ENCODE measurements at regions of chr4 and their contacts with region 1.

Region 1: DNA sequence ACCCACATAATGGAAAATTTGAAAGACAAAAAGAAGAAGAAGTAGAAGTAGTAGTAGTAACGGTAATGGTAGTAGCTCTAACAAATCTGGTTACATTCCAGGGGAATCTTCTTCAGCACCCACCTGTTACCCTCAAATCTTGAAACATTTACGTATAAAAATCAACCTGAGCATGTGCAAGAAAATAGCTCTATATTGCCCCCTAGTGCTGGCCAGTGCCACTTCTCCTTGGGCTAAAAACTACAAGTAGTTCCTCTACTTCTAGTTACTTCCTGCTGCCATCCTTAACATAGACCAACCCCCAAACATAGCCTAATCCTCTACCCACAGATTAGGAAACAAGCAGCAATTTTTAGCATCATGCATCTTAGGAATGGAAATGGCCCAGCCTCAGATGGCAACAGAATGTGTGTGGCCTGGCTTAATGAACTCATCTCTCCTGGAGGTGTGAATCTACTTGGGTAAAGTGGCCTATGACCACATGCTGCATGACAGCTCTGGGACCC is 3.1 kb downstream of the PDGFC start:
- DNase-seq: peak; percentile 76
- H3K4me3 Mint-ChIP-seq: peak overlapping the region; percentile 84
- H3K27ac Mint-ChIP-seq: peak overlapping the region; percentile 78
- H3K4me1 Mint-ChIP-seq: peaks cover 27% of the 10 kb centered on the region
- H3K27me3 Mint-ChIP-seq: no peaks in the 10 kb centered on the region
- CTCF ChIP-seq: peak; percentile 31

Region 2: GRCh38 chr4:156475322-156475721 is 493.2 kb before region 1 on chr4:
- CTCF ChIA-PET with region 1: interaction called, 10 read pairs
- intact Hi-C with region 1: loop called (anchors 1 kb)
- DNase-seq: peak; percentile 5
- H3K4me3 Mint-ChIP-seq: no peak overlapping the region
- H3K27ac Mint-ChIP-seq: no peak overlapping the region
- H3K4me1 Mint-ChIP-seq: peaks cover 11% of the 10 kb centered on the region
- H3K27me3 Mint-ChIP-seq: no peaks in the 10 kb centered on the region
- CTCF ChIP-seq: peak; percentile 19

Region 3: GRCh38 chr4:156677131-156677531 is 291.4 kb before region 1 on chr4:
- CTCF ChIA-PET with region 1: no interaction called
- intact Hi-C with region 1: loop called (anchors 5 kb)
- DNase-seq: peak; percentile 42
- H3K4me3 Mint-ChIP-seq: no peak overlapping the region
- H3K27ac Mint-ChIP-seq: peak overlapping the region; percentile 39
- H3K4me1 Mint-ChIP-seq: peaks cover 11% of the 10 kb centered on the region
- H3K27me3 Mint-ChIP-seq: no peaks in the 10 kb centered on the region
- CTCF ChIP-seq: peak; percentile 37

Region 4: DNA sequence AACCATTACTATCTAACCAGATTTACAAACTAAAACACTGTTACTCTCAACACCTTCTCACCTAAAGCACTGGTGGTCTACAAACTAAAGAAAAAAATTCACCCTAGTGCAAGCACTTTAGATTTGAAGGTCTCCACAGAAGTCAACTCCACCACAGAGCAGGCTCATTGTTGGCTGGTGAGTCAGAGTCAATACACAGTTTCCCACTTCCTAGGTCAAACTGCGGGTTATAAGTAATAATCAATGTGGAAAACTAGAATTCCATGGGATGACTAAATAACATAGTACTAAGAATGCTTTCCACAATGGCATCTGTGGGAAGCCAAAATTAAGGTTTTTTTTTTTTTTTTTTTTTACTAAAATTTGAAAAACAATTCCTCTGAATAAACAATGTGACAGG is 188.8 kb before region 1 on chr4:
- CTCF ChIA-PET with region 1: interaction called, 4 read pairs
- intact Hi-C with region 1: loop called (anchors 5 kb)
- DNase-seq: peak; percentile 37
- H3K4me3 Mint-ChIP-seq: peak overlapping the region; percentile 50
- H3K27ac Mint-ChIP-seq: peak overlapping the region; percentile 74
- H3K4me1 Mint-ChIP-seq: peaks cover 47% of the 10 kb centered on the region
- H3K27me3 Mint-ChIP-seq: no peaks in the 10 kb centered on the region
- CTCF ChIP-seq: no peak

Region 5: GRCh38 chr4:156941940-156942548 is 26.5 kb before region 1 on chr4:
- CTCF ChIA-PET with region 1: interaction called, 5 read pairs
- intact Hi-C with region 1: loop called (anchors 2 kb)
- DNase-seq: peak; percentile 77
- H3K4me3 Mint-ChIP-seq: peak overlapping the region; percentile 52
- H3K27ac Mint-ChIP-seq: peak overlapping the region; percentile 90
- H3K4me1 Mint-ChIP-seq: peaks cover 58% of the 10 kb centered on the region
- H3K27me3 Mint-ChIP-seq: no peaks in the 10 kb centered on the region
- CTCF ChIP-seq: no peak

Region 6: DNA sequence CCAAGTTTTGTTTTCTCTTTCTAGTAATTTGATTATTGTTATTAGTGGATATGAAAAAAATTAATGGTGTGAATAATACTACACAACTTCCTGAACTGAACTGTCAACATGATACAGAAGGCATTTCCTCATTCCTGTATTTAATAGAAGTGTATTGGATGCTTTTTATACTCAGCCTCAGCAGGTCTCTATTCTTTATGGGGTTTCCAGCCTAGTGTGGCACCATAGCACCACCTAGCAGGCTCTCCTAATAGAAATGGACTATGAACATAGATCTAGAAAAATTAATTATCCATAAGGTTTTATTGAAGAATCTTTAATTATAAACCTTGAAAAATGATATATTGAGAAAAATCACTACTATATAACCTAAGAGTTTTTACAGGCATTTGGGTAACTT is 159.9 kb after region 1 on chr4:
- CTCF ChIA-PET with region 1: no interaction called
- intact Hi-C with region 1: loop called (anchors 5 kb)
- DNase-seq: peak; percentile 31
- H3K4me3 Mint-ChIP-seq: no peak overlapping the region
- H3K27ac Mint-ChIP-seq: no peak overlapping the region
- H3K4me1 Mint-ChIP-seq: no peaks in the 10 kb centered on the region
- H3K27me3 Mint-ChIP-seq: no peaks in the 10 kb centered on the region
- CTCF ChIP-seq: no peak